GM23248 (cell line): ENCODE measurements at regions of chrX and their contacts with region 1.

Region 1: DNA sequence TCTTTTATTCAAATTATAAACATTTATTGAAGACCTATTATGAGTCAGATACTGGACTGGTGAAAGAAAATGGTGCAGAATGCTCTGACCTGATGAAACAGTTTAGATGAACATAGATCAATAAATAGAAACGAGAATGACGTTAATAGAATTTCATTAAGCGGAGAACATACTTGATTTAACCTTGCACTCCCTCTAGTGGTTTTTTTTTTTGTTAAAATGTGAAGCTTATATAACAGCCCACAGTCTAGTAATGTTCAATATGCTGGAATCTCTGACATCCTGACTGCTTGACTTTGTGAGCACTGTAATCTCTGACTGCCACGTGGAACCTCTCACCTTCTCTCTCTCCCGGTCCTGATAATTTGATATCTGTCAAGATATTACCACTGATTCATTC is 32.3 kb downstream of the HDAC8 start:
- DNase-seq: peak; percentile 41
- H3K4me3 ChIP-seq: no peak overlapping the region
- H3K27ac ChIP-seq: no peak overlapping the region
- H3K4me1 ChIP-seq: no peaks in the 10 kb centered on the region
- H3K27me3 ChIP-seq: no peaks in the 10 kb centered on the region

Region 2: GRCh38 chrX:72018277-72019112 is 521.8 kb before region 1 on chrX:
- in situ Hi-C with region 1: loop called (anchors 25 kb)
- DNase-seq: peak; percentile 93
- H3K4me3 ChIP-seq: peak overlapping the region; percentile 56
- H3K27ac ChIP-seq: no peak overlapping the region
- H3K4me1 ChIP-seq: 0 out of 2 replicates have a peak, but pooled peaks cover 5% of the 10 kb centered on the region
- H3K27me3 ChIP-seq: no peaks in the 10 kb centered on the region

Region 3: GRCh38 chrX:72297953-72298730 is 242.2 kb before region 1 on chrX:
- in situ Hi-C with region 1: loop called (anchors 25 kb)
- DNase-seq: peak; percentile 25
- H3K4me3 ChIP-seq: no peak overlapping the region
- H3K27ac ChIP-seq: no peak overlapping the region
- H3K4me1 ChIP-seq: no peaks in the 10 kb centered on the region
- H3K27me3 ChIP-seq: 0 out of 2 replicates have a peak, but pooled peaks cover 1% of the 10 kb centered on the region